CD8-positive, alpha-beta T cell (primary cell): ENCODE measurements at regions of chr17 and their contacts with region 1.

Region 1: DNA sequence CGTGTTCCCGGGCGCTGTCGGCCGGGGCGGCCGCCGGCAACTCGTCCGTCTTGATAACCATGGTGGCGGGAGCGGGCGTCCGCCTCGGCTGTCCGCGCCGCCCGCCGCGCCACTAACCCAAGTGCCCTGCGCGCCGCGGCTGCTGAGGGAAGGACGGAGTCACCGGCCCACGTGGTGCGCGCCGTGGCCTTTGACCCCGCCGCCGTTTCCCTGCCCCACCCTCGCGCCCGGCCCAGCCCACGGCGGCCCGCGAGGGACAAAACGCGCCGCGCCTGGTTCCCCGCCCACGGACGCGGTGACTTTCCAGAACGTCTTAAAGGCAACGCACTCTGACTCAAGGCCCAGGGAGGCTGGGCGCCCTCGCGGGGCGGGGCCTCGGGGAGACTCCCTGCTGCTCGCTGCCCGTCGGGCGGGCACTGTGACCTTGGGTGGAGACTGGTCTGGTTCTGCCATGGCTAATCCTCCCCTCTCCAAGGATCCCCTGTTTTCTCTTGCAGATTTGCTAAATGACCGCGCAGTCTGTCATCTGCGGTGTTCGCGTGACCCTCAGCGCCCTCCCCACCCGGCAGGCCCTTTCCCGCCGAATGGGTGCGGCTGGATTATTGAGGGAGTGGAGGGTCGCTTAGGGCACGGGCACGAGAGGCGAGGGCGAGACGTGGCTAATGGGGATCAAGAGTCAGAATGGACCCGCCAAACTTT is at the start of gene CLUH:
- DNase-seq: peak; percentile 90 to 98 (median 94)
- ATAC-seq: peak; percentile 93
- H3K4me3 ChIP-seq: peak within 1 kb of the TSS; percentile 64 to 84
- H3K4me3 Mint-ChIP-seq: peak within 1 kb of the TSS; percentile 88
- H3K27ac ChIP-seq: peak within 1 kb of the TSS; percentile 41 to 47
- H3K27ac Mint-ChIP-seq: peak within 1 kb of the TSS; percentile 77
- H3K4me1 ChIP-seq: peaks cover 45% of the 10 kb centered on the region
- H3K4me1 Mint-ChIP-seq: peaks cover 35% of the 10 kb centered on the region
- H3K27me3 ChIP-seq: no peaks in the 10 kb centered on the region
- H3K27me3 Mint-ChIP-seq: no peaks in the 10 kb centered on the region
- CTCF ChIP-seq: no peak
- total RNA-seq, gene CLUH: 50.8 to 51.1 TPM

Region 2: DNA sequence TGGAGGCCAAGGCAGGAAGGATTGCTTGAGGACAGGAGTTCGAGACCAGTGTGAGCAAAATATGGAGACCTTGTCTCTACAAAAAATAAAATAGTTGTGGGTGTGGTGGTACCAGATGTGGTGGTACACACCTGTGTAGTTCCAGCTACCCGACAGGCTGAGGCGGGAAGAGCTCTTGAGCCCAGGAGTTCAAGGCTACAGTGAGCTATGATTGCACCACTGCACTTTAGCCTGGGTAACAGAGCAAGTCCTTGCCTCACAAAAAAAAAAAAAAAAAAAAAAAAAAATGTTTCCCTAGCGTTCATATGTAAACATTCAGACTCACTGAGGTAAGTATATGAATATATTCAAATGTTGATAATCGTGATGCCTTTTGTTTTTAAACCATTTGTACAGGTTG is 39.7 kb before region 1 on chr17:
- CTCF ChIA-PET with region 1: interaction called, 8 read pairs
- POLR2A ChIA-PET with region 1: no interaction called
- intact Hi-C with region 1: loop called in 1 of 2 experiments (anchors 1 kb)
- DNase-seq: no peak
- ATAC-seq: no peak
- H3K4me3 ChIP-seq: no peak overlapping the region
- H3K4me3 Mint-ChIP-seq: no peak overlapping the region
- H3K27ac ChIP-seq: no peak overlapping the region
- H3K27ac Mint-ChIP-seq: no peak overlapping the region
- H3K4me1 ChIP-seq: no peaks in the 10 kb centered on the region
- H3K4me1 Mint-ChIP-seq: peaks cover 3% of the 10 kb centered on the region
- H3K27me3 ChIP-seq: no peaks in the 10 kb centered on the region
- H3K27me3 Mint-ChIP-seq: no peaks in the 10 kb centered on the region
- CTCF ChIP-seq: no peak